ENCODE measurements at regions of chr2 and their contacts with region 1.

Region 1: DNA sequence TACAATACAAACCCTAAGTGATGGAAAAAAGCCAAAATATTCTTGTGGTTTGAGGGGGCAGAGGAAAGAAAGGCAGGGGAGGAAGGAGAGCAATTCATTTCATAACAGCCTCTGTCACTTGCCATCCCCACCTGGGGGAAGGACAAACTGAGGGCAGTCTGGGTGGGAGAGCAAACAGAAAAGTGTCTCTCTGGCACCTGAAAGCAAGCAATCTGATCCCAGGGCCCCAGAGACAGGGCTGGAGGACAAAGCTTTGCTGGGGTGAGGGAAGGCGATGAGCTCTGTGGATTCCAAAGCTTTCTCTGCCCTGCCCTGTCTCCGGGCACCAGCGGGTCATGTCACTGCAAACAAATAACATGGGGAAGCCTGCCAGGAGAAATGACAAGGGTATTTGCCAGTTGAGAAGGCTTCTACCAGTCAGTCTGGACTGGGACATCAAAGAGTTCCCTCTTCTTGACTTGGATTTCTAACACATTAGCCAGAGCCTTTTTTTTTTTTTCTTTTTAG is 528.1 kb upstream of the TNP1 start:
- DNase-seq: peak; percentile 90 to 92
- H3K4me3 ChIP-seq: no peak overlapping the region
- H3K27ac ChIP-seq: peak overlapping the region; percentile 43
- H3K4me1 ChIP-seq: peaks cover 30% of the 10 kb centered on the region
- H3K27me3 ChIP-seq: no peaks in the 10 kb centered on the region
- CTCF ChIP-seq: no peak

Region 2: DNA sequence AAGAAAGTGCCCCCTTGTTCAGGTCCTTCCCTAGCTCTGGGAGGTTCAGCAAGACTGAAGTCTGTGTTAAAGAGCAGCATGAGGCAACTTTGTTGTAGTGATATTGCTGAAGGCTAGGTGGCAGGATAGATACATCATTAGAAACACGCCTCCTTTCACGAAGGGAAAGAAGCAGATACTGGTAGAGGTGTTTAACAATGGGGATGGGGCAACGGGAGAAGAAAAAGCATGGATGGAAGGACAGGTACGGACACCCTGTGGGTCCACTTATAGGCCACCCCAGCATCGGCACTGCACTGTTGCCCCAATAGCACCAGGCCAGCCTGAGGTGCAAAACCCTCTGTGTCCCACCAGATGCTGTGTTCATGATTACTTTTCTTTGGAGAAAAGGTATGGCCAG is 689.1 kb before region 1 on chr2:
- CTCF ChIA-PET with region 1: no interaction called
- POLR2A ChIA-PET with region 1: interaction called, 3 read pairs
- intact Hi-C with region 1: loop called (anchors 5 kb)
- DNase-seq: no peak
- H3K4me3 ChIP-seq: no peak overlapping the region
- H3K27ac ChIP-seq: no peak overlapping the region
- H3K4me1 ChIP-seq: 0 out of 2 replicates have a peak, but pooled peaks cover 3% of the 10 kb centered on the region
- H3K27me3 ChIP-seq: no peaks in the 10 kb centered on the region
- CTCF ChIP-seq: peak; percentile 67

Region 3: DNA sequence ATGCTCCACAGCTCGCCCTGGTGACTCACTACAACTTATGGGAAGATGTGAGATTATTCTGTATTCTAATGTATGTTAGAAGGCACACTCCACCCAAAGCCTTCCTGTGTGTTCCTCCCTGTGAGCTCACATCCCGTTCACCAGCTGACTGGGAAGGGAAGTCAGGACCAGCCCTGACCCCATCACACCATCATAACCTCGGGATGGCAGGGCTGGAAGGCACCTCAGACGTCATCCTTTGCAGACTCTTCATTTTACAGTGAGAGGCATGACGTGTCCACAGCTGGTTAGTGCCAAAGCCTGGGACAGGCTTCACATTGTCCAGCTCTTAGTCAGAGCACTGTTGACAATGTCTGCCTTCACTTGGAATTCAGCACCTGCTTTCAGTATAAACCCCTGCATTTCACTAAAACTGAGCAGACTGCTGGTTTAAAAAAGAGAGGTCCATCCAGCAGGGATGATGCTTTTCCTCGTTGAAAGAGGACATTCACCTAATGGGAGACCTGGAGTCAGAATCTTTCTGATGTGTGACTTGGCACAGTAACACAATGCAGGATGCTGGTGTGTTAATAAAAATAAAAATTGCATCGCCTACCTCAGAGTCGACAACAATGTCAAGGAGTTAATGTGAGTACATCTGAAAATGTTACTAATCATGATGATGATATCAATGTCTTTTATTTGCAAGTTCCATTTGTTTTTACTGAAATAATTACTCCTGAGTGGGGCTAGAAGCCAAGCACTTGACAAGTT is 110.1 kb before region 1 on chr2:
- CTCF ChIA-PET with region 1: no interaction called
- POLR2A ChIA-PET with region 1: no interaction called
- intact Hi-C with region 1: loop called (anchors 5 kb)
- DNase-seq: peak; percentile 66 to 74
- H3K4me3 ChIP-seq: no peak overlapping the region
- H3K27ac ChIP-seq: peak overlapping the region; percentile 25; the same call in 1 of the 2 replicates
- H3K4me1 ChIP-seq: peaks cover 25% of the 10 kb centered on the region; the same call in 1 of the 2 replicates
- H3K27me3 ChIP-seq: no peaks in the 10 kb centered on the region
- CTCF ChIP-seq: no peak

Region 4: DNA sequence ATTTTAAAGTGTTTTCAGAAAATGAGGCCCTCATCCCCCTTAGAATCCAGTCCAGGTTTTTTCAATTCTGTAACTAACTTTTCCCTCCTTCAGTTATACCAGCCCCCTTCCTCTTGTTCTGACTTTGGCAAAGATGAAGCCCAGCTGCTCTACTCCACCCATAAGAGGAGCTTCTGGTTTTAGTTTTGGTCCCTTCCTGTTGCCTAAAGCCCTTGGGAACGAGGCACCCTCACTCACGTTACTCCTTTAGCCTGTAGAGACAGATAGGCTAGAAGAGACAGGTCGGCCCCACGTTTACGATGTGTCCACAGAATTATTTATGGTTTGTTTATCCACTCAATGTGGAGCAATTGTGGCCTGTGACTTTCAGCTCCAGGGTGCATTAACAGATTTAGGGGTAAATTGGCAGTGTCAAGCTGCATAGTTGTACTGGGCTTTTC is 73.9 kb before region 1 on chr2:
- CTCF ChIA-PET with region 1: no interaction called
- POLR2A ChIA-PET with region 1: no interaction called
- intact Hi-C with region 1: no loop called
- DNase-seq: peak in 1 of 2 experiments; percentile 72
- H3K4me3 ChIP-seq: no peak overlapping the region
- H3K27ac ChIP-seq: no peak overlapping the region
- H3K4me1 ChIP-seq: peaks cover 17% of the 10 kb centered on the region
- H3K27me3 ChIP-seq: no peaks in the 10 kb centered on the region
- CTCF ChIP-seq: no peak

Region 5: GRCh38 chr2:217325821-217326539 is 62.0 kb before region 1 on chr2:
- CTCF ChIA-PET with region 1: no interaction called
- POLR2A ChIA-PET with region 1: no interaction called
- intact Hi-C with region 1: loop called (anchors 1 kb)
- DNase-seq: no peak
- H3K4me3 ChIP-seq: no peak overlapping the region; the same call in 1 of the 2 replicates
- H3K27ac ChIP-seq: peak overlapping the region; percentile 67
- H3K4me1 ChIP-seq: peaks cover 62% of the 10 kb centered on the region
- H3K27me3 ChIP-seq: no peaks in the 10 kb centered on the region
- CTCF ChIP-seq: no peak

Region 6: DNA sequence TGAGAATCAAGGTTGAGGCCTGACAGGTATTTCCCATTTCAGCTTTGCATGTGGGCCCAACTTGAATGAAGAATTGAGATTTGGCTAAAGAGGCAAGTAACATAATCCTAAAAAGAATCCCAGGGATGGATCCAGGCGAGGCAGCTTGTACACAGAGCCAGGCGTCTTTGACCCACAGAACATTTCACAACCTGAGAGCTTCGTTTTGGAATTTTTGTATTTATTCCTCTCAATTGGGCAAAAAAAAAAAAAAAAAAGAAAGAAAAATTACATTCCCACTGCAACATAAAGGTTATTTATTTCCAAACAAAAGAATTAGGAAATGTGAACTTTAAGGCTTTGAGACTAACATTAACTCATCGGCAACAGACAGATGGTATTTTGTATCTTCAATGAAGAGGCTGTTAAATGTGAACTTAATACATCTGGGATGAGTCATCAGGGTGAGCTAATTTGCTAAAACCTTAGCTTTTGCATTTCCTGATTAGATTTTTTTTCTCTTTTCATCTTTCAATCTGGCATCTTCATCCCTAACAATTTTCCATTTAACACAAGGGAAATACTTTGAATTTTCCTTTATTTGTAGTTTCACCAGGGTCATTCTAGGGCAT is 49.6 kb before region 1 on chr2:
- CTCF ChIA-PET with region 1: no interaction called
- POLR2A ChIA-PET with region 1: interaction called, 18 read pairs
- intact Hi-C with region 1: no loop called
- DNase-seq: peak in 1 of 2 experiments; percentile 55
- H3K4me3 ChIP-seq: no peak overlapping the region
- H3K27ac ChIP-seq: peak overlapping the region; percentile 29; the same call in 1 of the 2 replicates
- H3K4me1 ChIP-seq: peaks cover 40% of the 10 kb centered on the region
- H3K27me3 ChIP-seq: no peaks in the 10 kb centered on the region
- CTCF ChIP-seq: no peak